ENCODE measurements at regions of chr1 and their contacts with region 1.

Region 1: GRCh38 chr1:183932412-183932811 is 105.1 kb downstream of the COLGALT2 start:
- DNase-seq: peak; percentile 83 to 94 (median 91)
- ATAC-seq: peak; percentile 77 to 91 (median 88)
- H3K4me3 ChIP-seq: peak overlapping the region in 4 of 12 donors; percentile 3 to 19 (median 12)
- H3K27ac ChIP-seq: peak overlapping the region in 9 of 12 donors; percentile 26 to 73 (median 57)
- H3K4me1 ChIP-seq: peaks cover 0 to 30% (median 11%) of the 10 kb centered on the region in 12 donors
- H3K27me3 ChIP-seq: no peaks in the 10 kb centered on the region
- CTCF ChIP-seq: no peak
- POLR2A ChIP-seq: no peak

Region 2: GRCh38 chr1:183896466-183897048 is 35.9 kb before region 1 on chr1:
- intact Hi-C with region 1: no loop called
- DNase-seq: no peak
- ATAC-seq: peak in 3 of 4 donors; percentile 32 to 42 (median 34)
- H3K4me3 ChIP-seq: no peak overlapping the region
- H3K27ac ChIP-seq: peak overlapping the region in 5 of 12 donors; percentile 0 to 81 (median 15)
- H3K4me1 ChIP-seq: peaks cover 0 to 74% (median 6%) of the 10 kb centered on the region in 12 donors
- H3K27me3 ChIP-seq: no peaks in the 10 kb centered on the region
- CTCF ChIP-seq: no peak
- POLR2A ChIP-seq: no peak

Region 3: DNA sequence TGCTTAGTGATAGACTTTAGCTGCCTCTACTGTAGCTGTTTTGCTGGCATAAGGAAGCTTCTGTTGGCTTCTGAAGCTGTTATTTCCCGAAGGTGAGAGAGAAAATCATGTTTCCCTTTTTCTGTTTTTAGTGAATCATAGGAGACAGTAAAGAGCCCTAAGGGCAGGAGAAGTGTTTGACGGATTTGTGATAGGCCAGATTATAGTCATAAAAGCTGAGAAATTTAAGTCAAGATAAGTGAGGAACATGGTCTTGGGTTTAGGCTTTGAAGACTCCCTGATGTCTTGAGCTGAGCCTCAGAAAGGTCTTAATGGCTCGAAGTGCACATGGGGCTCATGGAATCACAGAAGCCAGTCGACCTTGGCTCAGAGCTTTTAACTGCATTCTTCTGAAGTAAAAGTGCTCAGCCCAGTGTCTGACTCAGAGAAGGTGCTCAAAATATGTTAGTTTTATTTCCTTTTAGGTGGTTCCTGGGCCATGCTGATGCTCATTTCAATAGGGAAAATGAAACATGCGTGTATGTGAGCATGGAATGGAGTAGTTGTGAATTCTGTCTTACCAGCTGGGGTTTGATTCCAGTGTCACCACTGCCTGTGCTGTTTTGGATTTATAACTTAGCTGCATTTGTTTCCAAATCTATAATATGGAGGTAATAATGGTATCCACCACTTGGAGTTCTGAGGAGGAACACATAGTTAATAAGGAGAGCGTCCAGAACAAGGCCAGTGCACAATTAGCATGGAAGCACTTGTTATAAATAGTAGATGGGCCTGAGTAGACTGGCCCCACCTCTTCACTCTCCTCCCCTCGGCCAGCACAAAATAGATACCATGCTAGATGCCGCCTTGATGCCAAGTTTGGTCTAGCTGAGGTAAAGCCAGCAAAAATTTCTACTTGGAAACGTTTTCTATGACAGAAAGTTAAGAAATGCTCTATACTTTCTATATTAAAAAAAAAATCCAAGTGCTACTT is 553.6 kb after region 1 on chr1:
- intact Hi-C with region 1: no loop called
- DNase-seq: peak in 2 of 5 donors; percentile 34 to 42
- ATAC-seq: peak; percentile 59 to 72 (median 66)
- H3K4me3 ChIP-seq: no peak overlapping the region
- H3K27ac ChIP-seq: peak overlapping the region; percentile 43 to 75 (median 66)
- H3K4me1 ChIP-seq: peaks cover 11 to 95% (median 80%) of the 10 kb centered on the region in 12 donors
- H3K27me3 ChIP-seq: no peaks in the 10 kb centered on the region
- CTCF ChIP-seq: no peak
- POLR2A ChIP-seq: no peak

Region 4: GRCh38 chr1:184691719-184692324 is 759.4 kb after region 1 on chr1:
- intact Hi-C with region 1: loop called in 1 of 10 experiments (anchors 10 kb)
- DNase-seq: no peak
- ATAC-seq: peak in 2 of 4 donors; percentile 52 to 68
- H3K4me3 ChIP-seq: no peak overlapping the region
- H3K27ac ChIP-seq: no peak overlapping the region
- H3K4me1 ChIP-seq: peaks cover 0 to 3% (median 0%) of the 10 kb centered on the region in 12 donors
- H3K27me3 ChIP-seq: no peaks in the 10 kb centered on the region
- CTCF ChIP-seq: peak; percentile 55 to 87 (median 78)
- POLR2A ChIP-seq: no peak